Activated CD4-positive, alpha-beta memory T cell treated with anti-CD3 and anti-CD28 coated beads for 36 hours (primary cell): ENCODE measurements at regions of chr2 and their contacts with region 1.

Region 1: GRCh38 chr2:73071360-73072133 is at the start of gene SFXN5:
- DNase-seq: peak; percentile 97
- H3K4me3 Mint-ChIP-seq: peak within 1 kb of the TSS; percentile 80
- H3K27ac Mint-ChIP-seq: peak within 1 kb of the TSS; percentile 71
- H3K4me1 Mint-ChIP-seq: peaks cover 23% of the 10 kb centered on the region
- H3K27me3 Mint-ChIP-seq: no peaks in the 10 kb centered on the region
- total RNA-seq, gene SFXN5: 4.5 to 7.6 TPM

Region 2: GRCh38 chr2:72993147-72993932 is 78.2 kb before region 1 on chr2:
- CTCF ChIA-PET with region 1: no interaction called
- POLR2A ChIA-PET with region 1: no interaction called
- intact Hi-C with region 1: loop called (anchors 5 kb)
- DNase-seq: peak; percentile 40
- H3K4me3 Mint-ChIP-seq: no peak overlapping the region
- H3K27ac Mint-ChIP-seq: no peak overlapping the region
- H3K4me1 Mint-ChIP-seq: no peaks in the 10 kb centered on the region
- H3K27me3 Mint-ChIP-seq: no peaks in the 10 kb centered on the region

Region 3: GRCh38 chr2:73212448-73213176 is 141.1 kb after region 1 on chr2:
- CTCF ChIA-PET with region 1: interaction called, 7 read pairs
- POLR2A ChIA-PET with region 1: no interaction called
- intact Hi-C with region 1: loop called (anchors 1 kb)
- DNase-seq: peak; percentile 86
- H3K4me3 Mint-ChIP-seq: no peak overlapping the region
- H3K27ac Mint-ChIP-seq: no peak overlapping the region
- H3K4me1 Mint-ChIP-seq: peaks cover 39% of the 10 kb centered on the region
- H3K27me3 Mint-ChIP-seq: peaks cover 5% of the 10 kb centered on the region

Region 4: DNA sequence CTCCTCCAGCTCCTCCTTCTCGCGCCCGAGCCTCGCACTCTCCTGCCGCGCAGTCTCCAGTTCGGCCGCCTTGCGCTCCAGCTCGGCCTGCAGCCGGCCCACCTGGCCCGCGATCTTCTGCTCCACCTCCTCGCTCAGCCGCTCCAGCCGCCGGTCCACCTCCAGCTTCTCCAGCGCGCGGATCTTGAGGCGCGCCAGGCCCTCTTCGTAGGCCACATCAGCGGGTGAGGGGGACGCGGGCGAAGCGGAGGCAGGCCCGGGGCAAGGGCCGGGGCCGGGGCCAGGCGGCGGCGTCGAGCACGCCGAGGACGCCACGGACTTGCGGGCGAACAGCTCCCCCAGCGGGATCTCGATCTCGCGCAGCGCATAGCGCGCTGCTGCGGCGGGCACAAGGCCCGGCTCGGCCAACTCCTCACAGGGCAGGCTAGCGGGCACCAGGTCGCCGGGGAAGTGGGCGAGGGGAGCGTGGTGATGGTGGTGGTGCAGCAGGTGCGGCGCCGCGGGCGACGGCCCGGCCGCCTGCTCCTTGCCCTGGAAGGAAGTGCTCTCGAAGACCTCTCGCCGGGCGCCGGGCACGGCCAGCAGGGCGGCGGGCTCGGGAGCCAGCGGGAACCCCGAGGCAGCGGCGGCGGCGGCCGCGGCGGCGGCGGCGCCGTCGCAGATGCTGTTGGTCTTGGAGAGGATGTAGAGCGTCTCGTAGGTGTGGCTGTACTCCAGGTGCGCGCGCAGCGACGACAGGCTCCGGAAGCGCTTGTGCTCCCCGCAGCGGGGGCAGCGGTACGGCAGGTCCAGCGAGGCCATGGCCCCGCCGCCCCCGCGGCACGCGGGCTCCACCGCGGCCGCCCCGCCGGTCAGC is 197.5 kb after region 1 on chr2:
- CTCF ChIA-PET with region 1: no interaction called
- POLR2A ChIA-PET with region 1: no interaction called
- intact Hi-C with region 1: no loop called
- DNase-seq: peak; percentile 84
- H3K4me3 Mint-ChIP-seq: peak overlapping the region; percentile 30
- H3K27ac Mint-ChIP-seq: no peak overlapping the region
- H3K4me1 Mint-ChIP-seq: peaks cover 19% of the 10 kb centered on the region
- H3K27me3 Mint-ChIP-seq: no peaks in the 10 kb centered on the region

Region 5: DNA sequence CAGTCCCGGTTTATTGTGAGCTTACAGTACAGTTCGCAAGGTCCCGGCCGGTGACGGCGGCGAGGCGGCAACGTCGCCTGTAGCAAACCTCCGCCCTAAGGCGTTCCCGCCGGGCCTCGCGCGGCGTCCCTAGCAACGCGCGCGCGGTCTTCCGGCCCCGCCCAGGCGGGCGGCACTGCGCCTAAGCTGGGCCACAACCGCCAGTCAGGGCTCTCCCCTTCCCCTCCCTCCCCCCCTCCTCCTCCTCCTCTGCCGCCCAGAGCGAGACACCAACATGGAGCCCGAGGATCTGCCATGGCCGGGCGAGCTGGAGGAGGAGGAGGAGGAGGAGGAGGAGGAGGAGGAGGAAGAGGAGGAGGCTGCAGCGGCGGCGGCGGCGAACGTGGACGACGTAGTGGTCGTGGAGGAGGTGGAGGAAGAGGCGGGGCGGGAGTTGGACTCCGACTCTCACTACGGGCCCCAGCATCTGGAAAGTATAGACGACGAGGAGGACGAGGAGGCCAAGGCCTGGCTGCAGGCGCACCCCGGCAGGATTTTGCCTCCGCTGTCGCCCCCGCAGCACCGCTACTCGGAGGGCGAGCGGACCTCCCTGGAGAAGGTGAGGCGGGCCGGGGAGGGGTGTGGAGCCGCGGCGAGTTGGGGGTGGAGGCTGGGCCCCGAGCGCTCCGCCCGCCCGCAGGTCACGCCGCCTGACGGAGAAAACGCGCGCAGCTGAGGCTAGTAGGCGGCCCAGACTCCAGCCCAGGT is 314.2 kb after region 1 on chr2 and contains the start of gene ALMS1:
- CTCF ChIA-PET with region 1: no interaction called
- POLR2A ChIA-PET with region 1: no interaction called
- intact Hi-C with region 1: loop called (anchors 2 kb)
- DNase-seq: peak; percentile 94
- H3K4me3 Mint-ChIP-seq: peak within 1 kb of the TSS; percentile 92
- H3K27ac Mint-ChIP-seq: peak within 1 kb of the TSS; percentile 82
- H3K4me1 Mint-ChIP-seq: peaks cover 26% of the 10 kb centered on the region
- H3K27me3 Mint-ChIP-seq: no peaks in the 10 kb centered on the region
- total RNA-seq, gene ALMS1: 20.4 to 22.7 TPM